Activated CD4-positive, alpha-beta T cell treated with anti-CD3 and anti-CD28 coated beads for 36 hours (primary cell): ENCODE measurements at regions of chr6 and their contacts with region 1.

Region 1: DNA sequence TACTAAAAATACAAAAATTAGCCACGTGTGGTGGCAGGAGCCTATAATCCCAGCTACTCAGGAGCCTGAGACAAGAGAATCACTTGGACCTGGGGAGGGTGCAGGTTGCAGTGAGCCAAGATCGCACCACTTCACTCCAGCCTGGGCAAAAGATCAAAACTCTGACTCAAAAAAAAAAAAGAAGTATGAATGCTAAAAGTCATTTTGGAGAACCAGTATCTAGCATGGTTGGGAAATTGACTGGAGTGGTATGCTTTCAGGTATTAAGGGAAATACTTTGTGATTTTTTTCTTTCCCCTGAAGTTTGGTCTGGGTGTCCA is 30.1 kb downstream of the PCMT1 start:
- DNase-seq: no peak
- ATAC-seq: no peak
- H3K4me3 Mint-ChIP-seq: no peak overlapping the region
- H3K27ac Mint-ChIP-seq: no peak overlapping the region
- H3K4me1 Mint-ChIP-seq: no peaks in the 10 kb centered on the region
- H3K27me3 Mint-ChIP-seq: no peaks in the 10 kb centered on the region

Region 2: GRCh38 chr6:149809798-149810197 is 30.2 kb after region 1 on chr6:
- CTCF ChIA-PET with region 1: interaction called, 3 read pairs
- POLR2A ChIA-PET with region 1: no interaction called
- intact Hi-C with region 1: loop called in 1 of 2 experiments (anchors 5 kb)
- DNase-seq: no peak
- ATAC-seq: no peak
- H3K4me3 Mint-ChIP-seq: no peak overlapping the region
- H3K27ac Mint-ChIP-seq: no peak overlapping the region
- H3K4me1 Mint-ChIP-seq: peaks cover 6% of the 10 kb centered on the region
- H3K27me3 Mint-ChIP-seq: no peaks in the 10 kb centered on the region